AG04449 (cell line): ENCODE measurements at regions of chr6 and their contacts with region 1.

Region 1: DNA sequence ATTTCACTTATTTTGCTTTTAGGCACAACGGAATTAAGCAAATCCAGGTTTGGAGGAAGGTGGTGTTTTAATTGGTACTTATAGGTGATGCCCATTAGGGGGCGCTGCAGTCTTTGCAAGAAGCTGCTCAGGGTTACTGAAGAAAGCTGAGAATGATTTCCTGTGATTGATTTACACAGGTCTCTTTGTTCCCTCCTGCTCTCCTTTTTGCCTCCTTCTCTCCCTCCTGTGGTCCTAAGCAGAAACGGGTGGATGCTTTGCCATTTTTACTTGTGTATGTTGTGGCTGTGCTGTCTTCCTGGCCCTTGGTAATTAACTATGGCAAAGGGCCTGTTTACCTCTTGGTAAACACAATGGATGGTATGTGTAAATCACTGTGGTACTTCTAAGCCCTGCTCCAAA is 97.8 kb downstream of the ANKS1A start:
- DNase-seq: no peak
- H3K4me3 ChIP-seq: no peak overlapping the region
- CTCF ChIP-seq: peak; percentile 48

Region 2: DNA sequence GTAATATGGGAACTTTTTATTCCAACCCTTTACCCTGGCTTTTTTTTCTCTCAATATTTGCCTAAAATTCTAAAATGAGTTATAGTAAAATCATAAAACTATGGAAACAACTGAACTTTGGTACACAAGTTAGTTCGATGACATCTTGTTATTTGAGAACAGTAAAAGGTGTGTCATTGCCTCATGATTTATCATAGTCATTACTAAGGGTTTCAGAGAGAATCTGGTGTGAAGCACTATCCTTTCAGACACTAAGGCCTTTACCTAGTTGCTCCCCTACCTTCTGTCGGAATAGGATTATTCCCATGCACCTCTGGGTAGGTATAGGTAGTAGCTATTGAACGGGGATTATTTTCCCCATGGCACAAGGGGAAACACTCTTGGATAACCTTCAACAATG is 110.4 kb before region 1 on chr6:
- CTCF ChIA-PET with region 1: no interaction called
- POLR2A ChIA-PET with region 1: no interaction called
- DNase-seq: no peak
- H3K4me3 ChIP-seq: no peak overlapping the region
- CTCF ChIP-seq: no peak

Region 3: DNA sequence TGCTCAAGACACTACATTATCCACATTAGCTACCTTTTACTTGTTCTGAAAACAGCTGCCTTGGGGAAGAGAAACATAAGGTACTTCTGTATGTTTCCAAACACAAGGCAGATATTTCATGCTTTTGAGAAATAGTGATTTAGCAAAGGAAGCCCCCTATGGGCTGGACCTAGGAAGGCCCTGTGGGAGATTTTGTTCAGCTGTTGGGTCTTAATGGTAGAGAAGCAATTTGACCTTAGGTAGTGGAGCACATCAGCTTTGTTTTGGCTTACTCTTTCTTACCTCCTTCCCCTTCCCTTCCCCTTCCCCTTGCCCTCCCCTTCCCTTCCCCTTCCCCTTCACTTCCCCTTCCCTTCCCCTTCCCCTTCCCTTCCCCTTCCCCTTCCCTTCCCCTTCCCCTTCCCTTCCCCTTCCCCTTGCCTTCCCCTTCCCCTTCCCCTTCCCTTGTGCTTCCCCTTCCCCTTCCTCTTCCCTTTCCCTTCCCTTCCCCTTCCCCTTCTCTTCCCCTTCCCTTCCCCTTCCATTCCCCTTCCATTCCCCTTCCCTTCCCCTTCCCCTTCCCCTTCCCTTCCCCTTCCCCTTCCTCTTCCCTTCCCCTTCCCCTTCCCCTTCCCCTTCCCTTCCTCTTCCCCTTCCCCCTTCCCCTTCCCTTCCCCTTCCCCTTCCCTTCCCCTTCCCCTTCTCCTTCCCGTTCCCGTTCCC is 13.1 kb before region 1 on chr6:
- CTCF ChIA-PET with region 1: interaction called, 106 read pairs
- POLR2A ChIA-PET with region 1: no interaction called
- DNase-seq: no peak
- H3K4me3 ChIP-seq: no peak overlapping the region
- CTCF ChIP-seq: no peak

Region 4: DNA sequence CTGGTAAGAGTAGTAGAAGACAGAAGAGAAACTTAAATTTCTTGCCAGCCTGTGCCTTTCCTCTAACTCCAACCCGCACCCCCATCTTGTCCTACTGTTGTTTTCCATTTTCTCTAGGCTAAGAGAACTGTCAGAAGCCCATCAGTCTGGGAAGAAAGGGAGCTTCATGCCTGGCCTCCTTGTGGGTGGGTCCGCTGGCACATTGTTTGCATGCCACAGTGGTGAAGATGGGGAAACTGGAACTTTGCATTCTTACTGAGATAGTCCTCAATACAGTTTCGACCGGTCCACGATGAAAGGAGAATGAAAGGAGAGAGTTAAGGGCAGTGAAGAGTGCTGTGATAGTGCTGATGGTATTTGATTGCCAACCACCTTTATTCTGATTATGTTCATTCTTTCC is 51.2 kb after region 1 on chr6:
- CTCF ChIA-PET with region 1: interaction called, 10 read pairs
- POLR2A ChIA-PET with region 1: no interaction called
- DNase-seq: no peak
- H3K4me3 ChIP-seq: no peak overlapping the region
- CTCF ChIP-seq: no peak

Region 5: GRCh38 chr6:35128496-35128895 is 141.7 kb after region 1 on chr6:
- CTCF ChIA-PET with region 1: interaction called, 39 read pairs
- POLR2A ChIA-PET with region 1: no interaction called
- DNase-seq: peak; percentile 24
- H3K4me3 ChIP-seq: no peak overlapping the region
- CTCF ChIP-seq: no peak

Region 6: GRCh38 chr6:35202066-35202546 is 215.3 kb after region 1 on chr6:
- CTCF ChIA-PET with region 1: interaction called, 118 read pairs
- POLR2A ChIA-PET with region 1: no interaction called
- DNase-seq: no peak
- H3K4me3 ChIP-seq: no peak overlapping the region
- CTCF ChIP-seq: no peak

Region 7: DNA sequence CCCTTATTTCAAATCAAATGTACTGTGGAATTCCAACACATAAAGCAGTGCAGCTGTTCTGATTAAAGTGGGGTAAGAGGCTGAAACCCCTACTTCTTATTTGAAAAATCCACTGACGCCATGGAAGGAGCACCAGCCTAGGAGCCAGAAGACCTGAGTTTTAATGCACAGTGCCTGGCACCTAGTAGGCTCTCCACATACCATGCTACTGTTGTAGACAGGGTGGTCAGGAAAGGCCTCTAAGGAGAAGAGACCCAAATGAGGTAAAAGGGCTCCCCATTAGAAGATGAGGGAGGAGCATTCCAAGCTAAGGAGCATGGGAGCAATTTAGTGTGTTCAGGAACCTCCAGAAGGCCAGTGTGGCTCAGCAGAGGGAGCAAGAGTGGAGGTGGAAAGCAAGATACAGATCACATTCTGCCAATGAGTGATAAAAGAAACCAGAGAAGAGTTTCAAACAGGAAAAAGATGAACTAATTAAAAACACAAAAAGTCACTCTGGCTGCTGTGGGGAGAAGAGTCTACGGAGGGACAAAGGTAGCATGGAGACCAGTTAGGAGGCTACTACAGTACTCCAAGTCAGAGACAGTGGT is 260.9 kb after region 1 on chr6:
- CTCF ChIA-PET with region 1: interaction called, 153 read pairs
- POLR2A ChIA-PET with region 1: no interaction called
- DNase-seq: no peak
- H3K4me3 ChIP-seq: no peak overlapping the region
- CTCF ChIP-seq: no peak

Region 8: GRCh38 chr6:35318196-35319171 is 331.6 kb after region 1 on chr6:
- CTCF ChIA-PET with region 1: no interaction called
- POLR2A ChIA-PET with region 1: no interaction called
- DNase-seq: no peak
- H3K4me3 ChIP-seq: peak overlapping the region; percentile 63
- CTCF ChIP-seq: peak; percentile 23

Region 9: DNA sequence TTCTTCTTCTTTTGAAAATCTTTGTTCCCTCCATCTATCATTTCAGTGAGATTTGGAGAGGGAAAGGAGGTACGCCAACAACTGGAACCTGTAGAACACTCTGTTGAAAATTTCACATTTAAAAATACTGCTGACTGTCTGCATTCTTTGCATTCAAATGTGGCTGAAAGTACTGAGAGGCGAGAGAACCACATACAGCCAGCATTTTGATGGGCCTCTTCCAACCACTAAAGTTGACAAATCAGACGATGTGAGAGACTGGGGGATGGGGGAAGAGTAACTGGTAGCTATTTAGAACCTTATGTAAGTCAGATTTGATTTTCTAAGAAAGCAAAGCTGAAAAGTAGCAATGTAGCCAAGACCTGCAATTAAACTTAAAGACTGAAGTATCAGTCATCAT is 624.4 kb after region 1 on chr6:
- CTCF ChIA-PET with region 1: no interaction called
- POLR2A ChIA-PET with region 1: no interaction called
- DNase-seq: no peak
- H3K4me3 ChIP-seq: no peak overlapping the region
- CTCF ChIP-seq: no peak